Gastrocnemius medialis (tissue), 4 donors: ENCODE measurements at regions of chr19 and their contacts with region 1.

Region 1: DNA sequence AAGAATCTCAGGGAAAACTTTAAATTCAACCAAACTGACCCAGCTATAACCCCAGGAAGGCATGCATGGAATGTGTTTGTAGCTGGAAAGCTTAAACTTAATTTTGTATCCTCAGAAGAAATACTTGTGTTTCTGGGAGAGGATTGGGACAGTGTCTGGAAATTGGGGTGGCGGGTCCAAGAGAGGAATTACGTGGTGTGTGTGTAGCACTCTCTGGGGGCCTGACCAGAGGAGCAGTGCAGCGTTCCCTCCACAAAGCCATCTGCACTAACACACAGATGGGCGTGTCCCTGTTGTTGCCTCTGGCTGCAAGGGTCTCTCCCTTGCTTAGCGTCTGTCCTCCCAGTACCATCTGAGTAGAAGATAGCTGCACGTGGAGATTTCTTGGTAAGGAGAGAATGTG is 6.4 kb downstream of the GARRE1 start:
- DNase-seq: no peak
- ATAC-seq: no peak
- H3K4me3 ChIP-seq: no peak overlapping the region
- H3K27ac ChIP-seq: peak overlapping the region in 3 of 4 donors; percentile 10 to 58 (median 17)
- H3K4me1 ChIP-seq: peaks cover 69 to 70% of the 10 kb centered on the region in 2 donors
- H3K27me3 ChIP-seq: no peaks in the 10 kb centered on the region
- CTCF ChIP-seq: no peak
- POLR2A ChIP-seq: no peak

Region 2: DNA sequence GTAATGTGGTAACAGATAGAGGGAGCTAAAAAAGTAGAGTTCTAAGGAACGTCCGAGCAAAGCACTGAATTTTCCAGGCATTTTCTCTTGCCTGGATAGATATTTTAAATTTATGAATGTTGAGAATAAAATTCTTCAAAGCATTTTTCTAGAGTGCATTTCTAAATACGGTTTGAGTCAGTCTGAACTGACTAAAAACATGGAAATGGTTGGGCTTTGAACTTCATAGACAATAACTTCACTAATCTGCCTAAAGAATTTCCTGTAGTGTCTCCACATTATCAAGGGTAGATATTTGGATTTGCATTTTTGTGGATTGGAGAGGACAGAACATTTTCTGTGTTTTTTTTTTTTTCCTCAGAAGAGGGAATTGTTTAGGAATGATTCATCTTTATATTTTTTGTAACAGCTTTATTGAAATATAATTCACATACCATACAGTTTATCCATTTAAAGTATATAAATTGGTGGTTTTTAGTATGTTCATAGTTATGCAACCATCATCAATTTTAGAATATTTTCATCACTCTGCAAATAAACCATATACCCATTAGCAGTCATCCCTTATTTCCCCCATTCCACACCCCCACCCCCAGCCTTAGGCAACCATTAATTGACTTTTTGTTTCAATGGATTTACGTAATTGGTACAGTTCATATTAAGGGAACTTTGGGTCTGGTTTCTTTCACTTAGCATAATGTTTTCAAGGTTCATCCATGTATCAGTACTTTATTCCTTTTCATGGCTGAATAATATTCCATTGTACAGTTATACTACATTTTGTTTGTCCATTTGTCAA is 14.3 kb after region 1 on chr19:
- in situ Hi-C with region 1: no loop called
- intact Hi-C with region 1: no loop called
- DNase-seq: no peak
- ATAC-seq: no peak
- H3K4me3 ChIP-seq: no peak overlapping the region
- H3K27ac ChIP-seq: peak overlapping the region in 3 of 4 donors; percentile 81 to 84 (median 82)
- H3K4me1 ChIP-seq: peaks cover 55 to 63% of the 10 kb centered on the region in 2 donors
- H3K27me3 ChIP-seq: no peaks in the 10 kb centered on the region
- CTCF ChIP-seq: no peak
- POLR2A ChIP-seq: no peak

Region 3: DNA sequence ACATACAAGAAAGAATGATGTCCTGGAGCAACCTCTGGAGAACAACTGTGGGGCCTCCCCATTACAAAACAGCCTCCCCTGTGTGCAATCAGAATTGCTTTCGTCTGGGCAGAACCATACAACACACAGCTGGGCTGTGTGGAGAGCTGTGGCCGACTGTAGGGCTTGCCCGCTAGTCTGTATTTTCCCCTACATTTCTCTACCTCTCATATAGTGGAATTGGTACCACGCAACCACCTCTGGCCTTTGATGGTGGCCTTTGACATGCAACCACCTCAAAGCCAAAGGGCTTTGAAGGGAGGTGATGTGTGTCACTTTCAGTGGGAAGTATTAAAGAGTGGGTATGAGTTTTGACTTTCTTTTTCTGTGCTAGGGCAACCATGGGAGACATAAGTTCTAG is 27.6 kb after region 1 on chr19:
- in situ Hi-C with region 1: no loop called
- intact Hi-C with region 1: no loop called
- DNase-seq: no peak
- ATAC-seq: no peak
- H3K4me3 ChIP-seq: no peak overlapping the region
- H3K27ac ChIP-seq: no peak overlapping the region
- H3K4me1 ChIP-seq: peaks cover 3% of the 10 kb centered on the region in 2 donors
- H3K27me3 ChIP-seq: no peaks in the 10 kb centered on the region
- CTCF ChIP-seq: no peak
- POLR2A ChIP-seq: no peak

Region 4: GRCh38 chr19:34317311-34317927 is 56.6 kb after region 1 on chr19:
- in situ Hi-C with region 1: loop called in 1 of 4 experiments (anchors 10 kb)
- intact Hi-C with region 1: loop called (anchors 5 kb)
- DNase-seq: peak; percentile 31 to 46
- ATAC-seq: peak; percentile 55 to 76
- H3K4me3 ChIP-seq: no peak overlapping the region
- H3K27ac ChIP-seq: peak overlapping the region; percentile 71 to 84 (median 80)
- H3K4me1 ChIP-seq: peaks cover 68 to 77% of the 10 kb centered on the region in 2 donors
- H3K27me3 ChIP-seq: no peaks in the 10 kb centered on the region
- CTCF ChIP-seq: no peak
- POLR2A ChIP-seq: no peak

Region 5: DNA sequence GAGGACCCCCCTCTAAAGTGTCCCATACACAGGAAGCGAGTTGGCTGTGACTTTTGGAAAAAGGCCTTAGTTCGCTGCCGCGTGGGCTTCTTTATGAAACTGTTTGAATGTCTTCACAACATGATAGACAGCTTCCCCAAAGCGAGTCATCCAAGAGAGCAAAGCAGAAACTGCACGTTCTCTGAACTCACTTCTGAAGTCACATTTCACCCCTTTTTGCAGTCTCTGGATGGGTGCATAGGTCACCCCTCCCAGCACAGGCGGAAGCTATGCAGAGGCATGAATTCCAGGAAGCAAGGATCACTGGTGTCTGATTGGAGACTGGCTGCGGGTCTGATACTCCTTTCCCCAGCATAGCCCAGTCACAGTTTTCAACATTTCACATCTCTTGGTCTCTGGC is 114.8 kb after region 1 on chr19:
- in situ Hi-C with region 1: no loop called
- intact Hi-C with region 1: no loop called
- DNase-seq: no peak
- ATAC-seq: no peak
- H3K4me3 ChIP-seq: no peak overlapping the region
- H3K27ac ChIP-seq: peak overlapping the region in 1 of 4 donors; percentile 99
- H3K4me1 ChIP-seq: peaks cover 12 to 13% of the 10 kb centered on the region in 2 donors
- H3K27me3 ChIP-seq: no peaks in the 10 kb centered on the region
- CTCF ChIP-seq: no peak
- POLR2A ChIP-seq: no peak

Region 6: DNA sequence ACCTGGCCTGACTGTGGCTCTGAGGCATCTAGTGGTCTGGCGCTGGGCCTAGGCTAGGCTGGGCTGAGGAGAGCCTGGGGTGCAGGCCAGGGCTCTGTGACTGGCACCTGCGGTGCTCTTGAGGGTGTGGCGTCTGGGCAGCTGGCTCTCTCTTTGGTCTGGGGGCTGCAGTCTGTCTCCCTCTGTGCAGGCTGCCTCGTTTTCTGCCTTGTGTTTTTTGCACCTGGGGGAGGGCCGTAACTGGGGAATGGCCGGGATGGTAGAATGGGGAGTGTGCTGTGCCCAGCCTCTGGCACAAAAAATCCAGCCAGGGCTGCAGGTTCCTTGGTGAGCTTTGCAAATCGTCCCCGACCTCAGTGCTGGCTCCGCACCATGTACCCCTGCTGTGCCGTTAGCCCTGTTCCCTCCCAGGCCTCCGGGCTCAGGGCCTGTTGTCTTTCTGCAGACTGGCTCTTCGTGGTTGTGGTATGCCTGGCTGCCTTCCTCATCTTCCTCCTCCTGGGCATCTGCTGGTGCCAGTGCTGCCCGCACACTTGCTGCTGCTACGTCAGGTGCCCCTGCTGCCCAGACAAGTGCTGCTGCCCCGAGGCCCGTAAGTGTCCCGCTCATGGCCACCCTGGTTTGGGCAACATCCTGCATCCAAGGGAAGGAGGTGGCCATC is 1001.5 kb after region 1 on chr19:
- in situ Hi-C with region 1: no loop called
- intact Hi-C with region 1: no loop called
- DNase-seq: no peak
- ATAC-seq: no peak
- H3K4me3 ChIP-seq: no peak overlapping the region
- H3K27ac ChIP-seq: no peak overlapping the region
- H3K4me1 ChIP-seq: peaks cover 11 to 30% of the 10 kb centered on the region in 2 donors
- H3K27me3 ChIP-seq: peaks cover 0 to 2% (median 2%) of the 10 kb centered on the region in 3 donors
- CTCF ChIP-seq: no peak
- POLR2A ChIP-seq: no peak